K562 (cell line): ENCODE measurements at regions of chr1 and their contacts with region 1.

Region 1: GRCh38 chr1:77948841-77949424 is 29.9 kb downstream of the FUBP1 start:
- DNase-seq: peak in 1 of 4 experiments; percentile 16
- ATAC-seq: peak; percentile 72
- H3K4me3 ChIP-seq: no peak overlapping the region
- H3K27ac ChIP-seq: no peak overlapping the region
- H3K4me1 ChIP-seq: no peaks in the 10 kb centered on the region
- H3K27me3 ChIP-seq: no peaks in the 10 kb centered on the region
- CTCF ChIP-seq: 0 out of 6 replicates have a peak, but pooled peaks of 1 of the 3 experiments have one; percentile 19
- EP300 ChIP-seq: no peak
- POLR2A ChIP-seq: no peak
- RAD21 ChIP-seq: no peak

Region 2: DNA sequence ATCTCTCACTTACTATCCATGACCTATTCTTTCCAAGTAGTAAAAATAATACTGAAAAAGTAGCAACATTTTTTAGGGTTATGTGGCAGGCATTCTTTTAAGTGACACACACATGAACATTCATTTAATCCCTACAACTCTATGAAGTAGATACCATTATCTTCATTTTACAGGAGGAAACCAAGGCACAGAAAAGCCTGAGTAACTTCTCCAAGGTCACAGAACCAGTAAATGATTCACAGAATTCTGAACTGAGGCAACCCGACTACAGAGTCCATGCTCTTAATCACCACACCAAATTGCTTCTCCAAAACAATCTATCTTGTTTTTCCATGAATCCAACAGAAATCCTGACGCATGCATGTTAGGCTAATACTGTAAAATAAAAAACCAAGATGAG is 12.5 kb after region 1 on chr1:
- CTCF ChIA-PET with region 1: no interaction called
- POLR2A ChIA-PET with region 1: interaction called, 8 read pairs
- in situ Hi-C with region 1: no loop called
- intact Hi-C with region 1: loop called (anchors 2 kb)
- DNase-seq: no peak
- ATAC-seq: no peak
- H3K4me3 ChIP-seq: no peak overlapping the region
- H3K27ac ChIP-seq: no peak overlapping the region
- H3K4me1 ChIP-seq: no peaks in the 10 kb centered on the region
- H3K27me3 ChIP-seq: no peaks in the 10 kb centered on the region
- CTCF ChIP-seq: no peak
- EP300 ChIP-seq: no peak
- POLR2A ChIP-seq: no peak
- RAD21 ChIP-seq: no peak